ENCODE measurements at regions of chr1 and their contacts with region 1.

Region 1: GRCh38 chr1:51506537-51506936 is 12.5 kb downstream of the EPS15 start:
- DNase-seq: no peak
- H3K4me3 ChIP-seq: no peak overlapping the region
- H3K27ac ChIP-seq: no peak overlapping the region
- H3K4me1 ChIP-seq: peaks cover 15% of the 10 kb centered on the region; the same call in 1 of the 2 replicates
- H3K27me3 ChIP-seq: no peaks in the 10 kb centered on the region
- CTCF ChIP-seq: no peak

Region 2: DNA sequence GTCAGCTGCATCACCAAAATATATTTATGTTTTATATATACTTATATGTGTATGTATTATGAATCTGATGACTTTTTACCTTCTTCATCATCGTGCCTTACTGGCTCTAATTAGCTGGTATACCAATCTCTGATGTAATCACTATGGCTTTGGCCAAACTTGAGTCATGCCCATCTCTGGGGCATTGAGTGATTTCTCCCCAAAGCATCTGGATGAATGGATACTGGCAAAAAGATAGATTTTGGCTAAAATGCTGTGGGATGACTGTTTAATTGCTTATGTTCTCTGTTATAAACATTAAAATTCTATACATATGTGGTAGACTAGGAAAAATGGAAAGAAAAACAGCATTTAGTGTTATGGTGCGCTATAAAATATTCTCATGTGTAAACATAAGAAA is 516.8 kb before region 1 on chr1:
- CTCF ChIA-PET with region 1: no interaction called
- POLR2A ChIA-PET with region 1: no interaction called
- intact Hi-C with region 1: no loop called
- DNase-seq: no peak
- H3K4me3 ChIP-seq: no peak overlapping the region
- H3K27ac ChIP-seq: no peak overlapping the region
- H3K4me1 ChIP-seq: no peaks in the 10 kb centered on the region
- H3K27me3 ChIP-seq: no peaks in the 10 kb centered on the region
- CTCF ChIP-seq: no peak

Region 3: DNA sequence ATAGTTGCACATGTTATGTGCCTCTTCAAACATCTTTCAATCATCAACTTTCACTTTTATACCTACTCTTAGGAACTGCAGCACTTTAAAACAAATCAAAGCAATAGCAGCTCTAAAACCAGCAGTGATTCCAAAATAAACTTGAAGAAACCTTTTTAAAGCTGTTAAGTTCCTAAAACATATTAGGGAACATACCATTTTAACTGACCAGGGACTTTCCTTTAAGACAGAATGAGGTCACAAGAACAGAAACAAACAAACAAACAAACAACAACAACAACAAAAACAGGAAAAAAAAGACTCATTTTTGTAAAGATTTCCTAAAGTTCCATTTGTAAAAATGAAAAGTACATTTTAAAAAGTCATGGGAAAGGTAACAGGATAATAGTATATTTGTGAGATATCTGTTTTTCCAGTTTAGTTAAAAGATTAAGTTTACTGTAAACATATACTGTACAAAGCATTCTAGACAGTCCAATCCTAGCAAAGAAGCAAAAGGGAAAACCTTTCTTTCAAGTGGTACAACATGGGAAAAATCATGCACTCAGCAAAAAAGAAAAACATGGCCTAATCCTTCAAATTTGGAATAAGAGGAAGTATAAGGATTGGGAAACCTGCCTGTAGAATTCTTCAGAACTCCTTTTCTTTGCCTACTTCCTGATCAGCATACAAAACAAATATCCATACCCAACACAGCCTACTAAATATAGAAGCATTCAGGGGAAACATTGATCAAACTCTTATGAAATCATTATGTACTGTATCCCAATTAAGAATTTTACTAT is 33.0 kb before region 1 on chr1:
- CTCF ChIA-PET with region 1: no interaction called
- POLR2A ChIA-PET with region 1: no interaction called
- intact Hi-C with region 1: no loop called
- DNase-seq: no peak
- H3K4me3 ChIP-seq: no peak overlapping the region
- H3K27ac ChIP-seq: peak overlapping the region; percentile 10; the same call in 1 of the 2 replicates
- H3K4me1 ChIP-seq: no peaks in the 10 kb centered on the region
- H3K27me3 ChIP-seq: no peaks in the 10 kb centered on the region
- CTCF ChIP-seq: no peak

Region 4: GRCh38 chr1:51484591-51484990 is 21.9 kb before region 1 on chr1:
- CTCF ChIA-PET with region 1: no interaction called
- POLR2A ChIA-PET with region 1: no interaction called
- intact Hi-C with region 1: loop called (anchors 1 kb)
- DNase-seq: peak in 1 of 2 experiments; percentile 68
- H3K4me3 ChIP-seq: no peak overlapping the region
- H3K27ac ChIP-seq: no peak overlapping the region
- H3K4me1 ChIP-seq: no peaks in the 10 kb centered on the region
- H3K27me3 ChIP-seq: no peaks in the 10 kb centered on the region
- CTCF ChIP-seq: no peak